ENCODE measurements at regions of chr4 and their contacts with region 1.

Region 1: GRCh38 chr4:82739316-82740179 is 59.0 kb downstream of the SCD5 start:
- DNase-seq: peak; percentile 92
- H3K4me3 Mint-ChIP-seq: no peak overlapping the region
- H3K27ac Mint-ChIP-seq: no peak overlapping the region
- H3K4me1 Mint-ChIP-seq: peaks cover 2% of the 10 kb centered on the region
- H3K27me3 Mint-ChIP-seq: peaks cover 2% of the 10 kb centered on the region

Region 2: DNA sequence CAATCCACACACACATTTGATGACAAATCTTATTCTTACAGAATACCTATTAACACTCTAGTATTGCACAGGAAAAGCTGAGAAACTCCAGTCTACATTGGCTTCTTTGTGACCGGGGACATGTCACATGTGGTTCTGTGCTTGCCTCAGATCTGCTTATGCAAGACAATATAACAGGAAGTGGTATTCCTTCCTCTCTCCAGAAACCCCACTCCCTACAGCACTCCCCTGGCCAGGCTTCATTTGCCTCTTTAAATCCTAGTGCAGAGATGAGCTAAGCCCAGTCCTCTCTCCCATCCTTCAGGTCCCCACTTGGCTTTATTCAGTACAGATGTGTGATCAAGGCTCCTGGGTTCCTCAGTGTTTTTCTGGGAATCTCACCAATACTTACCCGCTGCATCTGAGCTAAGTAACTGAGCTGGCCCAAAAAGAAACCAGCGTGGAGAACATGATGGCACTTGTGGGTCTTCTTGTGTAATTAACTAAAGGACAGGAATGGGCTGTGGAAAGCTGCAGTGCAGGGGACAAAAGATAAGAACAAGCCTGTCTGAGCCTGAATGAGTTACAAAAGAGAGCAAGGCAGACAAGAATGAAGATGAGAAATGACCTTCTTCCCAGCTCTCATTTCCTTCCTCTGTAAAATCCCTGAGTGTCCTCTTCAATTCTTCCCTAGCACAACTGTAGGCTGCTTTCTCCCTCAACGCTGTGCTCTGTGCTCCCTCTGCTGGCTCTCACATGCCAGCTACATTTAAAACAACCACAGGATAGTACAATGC is 471.3 kb before region 1 on chr4:
- intact Hi-C with region 1: loop called (anchors 5 kb)
- DNase-seq: peak; percentile 80
- H3K4me3 Mint-ChIP-seq: no peak overlapping the region
- H3K27ac Mint-ChIP-seq: no peak overlapping the region
- H3K4me1 Mint-ChIP-seq: peaks cover 11% of the 10 kb centered on the region
- H3K27me3 Mint-ChIP-seq: peaks cover 11% of the 10 kb centered on the region

Region 3: GRCh38 chr4:82705928-82706300 is 33.6 kb before region 1 on chr4:
- intact Hi-C with region 1: no loop called
- DNase-seq: no peak
- H3K4me3 Mint-ChIP-seq: no peak overlapping the region
- H3K27ac Mint-ChIP-seq: no peak overlapping the region
- H3K4me1 Mint-ChIP-seq: no peaks in the 10 kb centered on the region
- H3K27me3 Mint-ChIP-seq: peaks cover 18% of the 10 kb centered on the region

Region 4: DNA sequence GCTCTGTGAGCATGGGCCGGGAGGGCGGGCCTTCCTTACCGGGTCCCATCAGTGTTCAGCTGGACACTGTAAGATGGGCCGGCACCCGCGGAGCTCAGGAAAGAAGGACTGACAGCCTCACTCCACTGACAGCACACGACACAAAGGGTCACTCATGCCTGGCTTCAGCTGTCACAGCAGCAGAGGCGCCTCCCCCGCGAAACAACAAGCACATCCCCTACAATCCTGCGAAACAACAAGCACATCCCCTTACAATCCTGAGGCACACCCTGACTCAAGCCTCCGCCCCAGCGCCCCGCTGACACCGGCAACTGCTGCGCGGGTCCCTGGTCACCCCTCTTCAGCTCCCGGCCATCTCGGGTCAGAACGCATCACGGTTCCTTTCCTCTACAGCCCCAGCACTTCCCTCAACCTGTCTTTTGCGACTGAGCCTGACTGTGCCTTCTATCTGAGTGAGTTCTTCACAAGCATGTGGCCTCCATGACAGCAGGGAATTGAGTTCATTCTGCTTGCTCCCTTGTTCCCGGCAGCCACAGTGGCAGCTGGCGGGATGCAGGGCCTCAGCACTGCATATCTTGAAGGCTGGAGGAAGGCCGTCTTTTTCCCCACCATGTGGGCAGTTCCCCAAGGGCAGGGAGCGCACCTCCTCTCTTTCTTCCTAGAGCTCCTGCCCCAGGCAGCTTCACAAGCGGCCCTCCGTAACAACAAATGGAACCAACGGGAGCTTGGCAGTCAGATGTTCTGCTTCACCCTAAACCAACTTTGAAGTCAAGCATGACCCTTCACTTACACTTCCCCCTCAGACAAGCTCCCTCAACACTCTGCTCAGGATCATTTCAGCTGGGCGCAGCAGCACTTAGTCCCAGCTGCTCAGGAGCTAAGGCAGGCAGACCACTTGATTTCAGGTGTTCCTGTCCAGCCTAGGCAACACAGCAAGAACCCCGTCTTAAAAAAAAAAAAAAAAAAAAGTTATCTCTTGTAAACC is 19.4 kb after region 1 on chr4:
- intact Hi-C with region 1: no loop called
- DNase-seq: no peak
- H3K4me3 Mint-ChIP-seq: no peak overlapping the region
- H3K27ac Mint-ChIP-seq: no peak overlapping the region
- H3K4me1 Mint-ChIP-seq: no peaks in the 10 kb centered on the region
- H3K27me3 Mint-ChIP-seq: peaks cover 14% of the 10 kb centered on the region